Activated CD4-positive, alpha-beta memory T cell treated with anti-CD3 and anti-CD28 coated beads for 36 hours (primary cell): ENCODE measurements at regions of chr16 and their contacts with region 1.

Region 1: DNA sequence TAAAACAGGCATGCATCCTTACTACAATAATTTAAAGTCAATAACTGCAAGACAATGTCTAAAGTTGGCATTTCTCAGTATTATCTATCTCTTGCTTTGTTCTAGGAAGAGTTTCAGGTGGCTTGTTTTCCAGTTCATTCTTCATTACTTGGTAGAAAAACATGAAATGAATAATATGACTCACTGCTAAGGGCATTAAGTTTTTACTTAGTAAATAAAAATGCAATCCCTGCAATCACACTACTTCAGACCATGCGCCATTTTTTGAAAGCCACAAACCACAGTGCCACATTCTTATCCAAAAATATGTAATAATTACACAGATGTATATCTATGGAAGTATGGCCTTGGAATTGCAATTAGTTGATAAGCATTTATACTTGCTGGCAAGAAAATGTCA is 55.4 kb downstream of the CREBBP start:
- DNase-seq: peak; percentile 54
- H3K4me3 Mint-ChIP-seq: no peak overlapping the region
- H3K27ac Mint-ChIP-seq: peak overlapping the region; percentile 24
- H3K4me1 Mint-ChIP-seq: peaks cover 77% of the 10 kb centered on the region
- H3K27me3 Mint-ChIP-seq: no peaks in the 10 kb centered on the region

Region 2: DNA sequence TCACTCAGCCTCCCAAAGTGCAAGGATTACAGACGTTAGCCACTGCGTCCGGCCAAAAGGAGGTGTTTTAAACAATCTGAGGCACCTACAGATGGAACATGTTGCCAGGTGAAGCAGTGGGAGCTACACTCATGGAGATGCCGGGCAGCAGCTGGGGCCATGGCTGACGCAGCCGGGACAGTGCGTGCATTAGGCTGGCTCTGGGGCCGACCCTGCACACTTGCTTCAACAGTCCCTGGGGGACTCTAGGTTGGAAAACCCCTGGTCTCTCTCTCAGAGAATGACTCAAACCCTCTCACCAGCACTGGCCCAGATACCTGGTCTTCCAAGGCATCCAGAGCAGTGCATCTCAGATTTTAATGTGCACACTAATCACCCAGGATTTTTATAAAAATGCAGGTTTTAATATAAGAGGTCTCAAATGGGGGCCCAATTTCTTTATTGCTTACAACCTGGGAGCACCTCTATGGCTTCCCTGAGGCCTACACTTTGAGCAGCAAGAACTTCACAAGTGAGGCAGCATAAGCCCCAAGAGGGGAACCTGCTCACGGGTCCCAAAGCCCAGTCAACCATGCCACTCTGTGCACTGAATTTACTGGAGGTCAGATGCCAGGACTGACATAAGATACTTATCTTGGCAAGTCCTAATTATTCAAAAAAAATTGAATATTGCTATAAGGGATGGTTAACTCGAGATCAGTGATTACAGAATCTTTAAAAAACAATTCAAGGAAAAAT is 37.0 kb before region 1 on chr16:
- CTCF ChIA-PET with region 1: no interaction called
- POLR2A ChIA-PET with region 1: no interaction called
- intact Hi-C with region 1: loop called (anchors 1 kb)
- DNase-seq: no peak
- H3K4me3 Mint-ChIP-seq: no peak overlapping the region
- H3K27ac Mint-ChIP-seq: no peak overlapping the region
- H3K4me1 Mint-ChIP-seq: peaks cover 27% of the 10 kb centered on the region
- H3K27me3 Mint-ChIP-seq: no peaks in the 10 kb centered on the region

Region 3: GRCh38 chr16:3810198-3810664 is 14.9 kb before region 1 on chr16:
- CTCF ChIA-PET with region 1: no interaction called
- POLR2A ChIA-PET with region 1: no interaction called
- intact Hi-C with region 1: loop called (anchors 2 kb)
- DNase-seq: peak; percentile 68
- H3K4me3 Mint-ChIP-seq: no peak overlapping the region
- H3K27ac Mint-ChIP-seq: no peak overlapping the region
- H3K4me1 Mint-ChIP-seq: peaks cover 78% of the 10 kb centered on the region
- H3K27me3 Mint-ChIP-seq: no peaks in the 10 kb centered on the region